ENCODE measurements at regions of chr6 and their contacts with region 1.

Region 1: GRCh38 chr6:134174672-134175198 is 122.3 kb upstream of the SLC2A12 start:
- DNase-seq: peak; percentile 89 to 97
- ATAC-seq: peak; percentile 87

Region 2: GRCh38 chr6:134512981-134513391 is 338.3 kb after region 1 on chr6:
- intact Hi-C with region 1: no loop called
- DNase-seq: no peak
- ATAC-seq: no peak

Region 3: DNA sequence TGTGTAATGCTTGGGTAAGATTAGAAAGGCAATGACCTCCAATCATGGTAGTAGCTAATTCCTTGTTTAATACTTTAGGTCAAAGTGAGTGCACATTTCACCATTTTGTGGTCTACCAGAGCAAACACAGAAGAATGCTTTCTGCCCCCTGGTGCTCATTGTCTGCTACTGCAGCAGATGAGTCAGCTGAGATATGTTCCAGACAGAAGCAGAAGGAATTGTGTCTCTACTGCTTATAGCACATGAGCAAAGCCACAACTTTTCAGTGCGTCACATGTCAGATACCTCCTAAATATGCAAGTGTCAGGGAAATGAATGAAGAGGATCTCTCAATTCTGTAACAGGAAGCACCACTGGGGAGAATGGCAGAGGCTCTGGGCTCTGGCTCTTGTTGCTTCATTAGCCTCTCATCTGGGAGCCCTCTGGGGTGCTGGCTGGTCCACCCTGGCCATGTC is 466.3 kb after region 1 on chr6:
- intact Hi-C with region 1: loop called in 1 of 2 experiments (anchors 5 kb)
- DNase-seq: peak; percentile 69 to 76
- ATAC-seq: peak; percentile 49

Region 4: DNA sequence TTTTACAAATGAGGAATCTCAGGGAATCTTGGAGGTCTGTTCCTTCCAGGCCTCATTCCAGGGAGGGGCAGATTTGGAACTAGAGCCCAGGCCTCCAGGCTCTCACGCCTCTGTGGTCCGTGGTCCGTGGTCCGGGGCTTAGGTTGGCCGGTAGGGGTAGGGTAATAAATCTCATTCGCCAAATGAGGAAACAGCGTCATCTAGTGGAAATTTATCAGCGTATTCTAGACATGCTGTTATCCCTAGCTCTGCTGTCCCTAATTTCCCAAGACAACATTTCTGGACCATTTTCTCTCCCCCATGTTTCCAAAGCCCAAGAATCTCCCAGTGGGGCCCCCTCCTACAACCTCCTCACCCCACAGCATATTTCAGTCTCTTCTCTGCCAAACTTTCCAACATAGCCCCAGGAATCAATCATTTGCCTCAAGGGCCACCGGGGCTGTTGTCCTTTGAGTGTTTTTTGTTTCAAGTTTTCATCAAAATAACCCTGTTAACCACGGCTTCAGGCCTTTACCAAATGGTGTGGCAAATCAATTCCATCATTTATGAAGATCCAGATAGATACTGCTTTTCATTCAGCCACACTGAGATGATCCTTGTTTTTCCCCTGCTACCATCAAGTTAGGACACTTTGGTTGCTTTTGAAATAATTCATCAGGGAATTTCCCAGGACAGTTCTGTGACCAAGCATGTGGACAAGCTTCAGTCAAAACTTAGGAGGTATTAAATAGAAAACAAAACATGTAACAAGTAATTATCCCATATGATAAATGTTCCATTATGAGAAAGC is 648.4 kb after region 1 on chr6:
- intact Hi-C with region 1: loop called in 1 of 2 experiments (anchors 5 kb)
- DNase-seq: peak in 1 of 2 donors; percentile 8
- ATAC-seq: peak; percentile 97

Measured in left colon (tissue), 2 donors.